ENCODE measurements at regions of chr2 and their contacts with region 1.

Region 1: GRCh38 chr2:37832590-37833197 is 92.4 kb upstream of the RMDN2 start:
- DNase-seq: no peak
- H3K4me3 ChIP-seq: no peak overlapping the region
- CTCF ChIP-seq: peak; percentile 73

Region 2: DNA sequence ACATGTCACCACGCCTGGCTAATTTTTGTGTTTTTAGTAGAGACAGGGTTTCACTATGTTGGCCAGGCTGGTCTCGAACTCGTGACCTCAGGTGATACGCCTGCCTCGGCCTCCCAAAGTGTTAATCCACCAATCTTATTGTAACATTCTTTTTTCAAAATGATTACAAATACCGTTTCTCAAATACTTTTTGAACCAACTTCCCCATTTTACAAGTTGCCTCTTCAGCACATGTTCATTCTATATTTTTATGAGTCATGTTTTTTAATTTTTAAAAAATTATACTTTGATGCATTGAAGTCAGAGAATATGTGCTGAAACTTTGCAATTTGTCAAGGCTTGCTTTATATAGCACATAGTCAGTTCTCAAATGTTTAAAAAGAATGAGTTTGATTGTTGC is 430.1 kb before region 1 on chr2:
- CTCF ChIA-PET with region 1: interaction called, 32 read pairs
- POLR2A ChIA-PET with region 1: no interaction called
- DNase-seq: no peak
- H3K4me3 ChIP-seq: no peak overlapping the region
- CTCF ChIP-seq: no peak

Region 3: DNA sequence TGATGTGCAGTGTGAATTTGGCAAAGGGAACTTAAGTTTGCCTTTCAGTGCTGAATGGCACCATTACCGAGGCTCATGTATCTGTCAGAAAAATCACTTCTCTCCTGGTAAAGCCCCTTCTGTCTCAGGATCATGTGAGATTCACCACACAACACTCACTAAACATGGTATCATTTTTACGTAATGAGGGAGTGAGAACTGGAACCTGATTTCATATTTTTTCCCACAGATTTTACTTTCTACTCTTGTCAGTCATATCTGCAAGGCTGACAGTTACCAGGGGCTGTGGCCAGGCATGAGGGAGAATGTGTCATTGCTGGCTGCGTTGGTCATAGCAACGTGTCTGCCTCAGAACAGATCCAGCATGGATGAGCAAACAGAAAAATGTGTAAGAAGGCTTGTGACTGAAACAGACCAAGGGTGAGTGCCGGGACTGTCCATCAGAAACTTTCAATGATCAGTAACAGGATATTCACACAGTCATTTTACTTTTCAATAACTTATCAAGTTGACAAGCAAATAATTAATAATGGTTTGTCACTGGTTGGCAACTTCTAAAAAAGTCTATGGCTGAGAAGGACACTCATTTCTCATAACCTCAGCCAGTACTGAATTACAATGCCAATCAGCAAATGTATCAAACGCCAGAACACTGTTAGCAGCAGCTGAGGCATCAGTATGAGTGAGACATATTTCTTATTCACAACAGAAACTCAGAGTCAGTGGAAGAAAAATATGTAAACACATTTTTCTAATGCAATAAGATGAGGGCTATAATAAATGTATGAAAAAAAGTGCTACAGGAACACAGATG is 261.7 kb before region 1 on chr2:
- CTCF ChIA-PET with region 1: no interaction called
- POLR2A ChIA-PET with region 1: no interaction called
- DNase-seq: peak; percentile 58
- H3K4me3 ChIP-seq: no peak overlapping the region
- CTCF ChIP-seq: no peak

Region 4: DNA sequence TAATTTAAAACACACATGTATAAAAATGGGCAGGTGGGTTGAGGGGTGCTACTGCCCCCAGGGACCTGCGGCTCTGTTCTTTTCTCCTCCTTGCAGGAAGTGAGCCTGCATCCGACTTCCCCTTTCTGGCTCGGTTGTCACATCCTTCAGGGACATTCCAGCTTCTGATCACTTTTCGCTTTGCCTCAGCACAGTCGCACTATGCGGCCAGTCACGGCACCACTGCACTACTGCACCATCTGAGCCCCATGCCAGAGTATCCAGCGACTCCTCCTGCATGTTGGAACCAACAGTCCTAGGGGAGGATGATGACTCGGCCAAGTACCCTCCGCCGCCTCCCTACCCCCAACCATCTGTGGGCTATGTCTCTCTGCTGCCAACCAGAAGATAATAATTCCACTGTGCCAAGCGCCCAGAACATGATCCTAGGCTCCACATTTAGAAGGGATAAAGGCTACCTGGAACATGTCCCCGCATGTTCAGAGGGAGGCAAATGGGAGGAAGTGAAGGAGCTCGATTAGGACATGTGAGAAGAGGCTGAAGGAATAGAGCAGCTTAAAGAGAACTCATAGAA is 178.8 kb before region 1 on chr2:
- CTCF ChIA-PET with region 1: interaction called, 17 read pairs
- POLR2A ChIA-PET with region 1: interaction called, 5 read pairs
- DNase-seq: no peak
- H3K4me3 ChIP-seq: no peak overlapping the region
- CTCF ChIP-seq: no peak

Region 5: GRCh38 chr2:37672104-37672869 is 160.4 kb before region 1 on chr2:
- CTCF ChIA-PET with region 1: interaction called, 22 read pairs
- POLR2A ChIA-PET with region 1: interaction called, 20 read pairs
- DNase-seq: peak; percentile 75
- H3K4me3 ChIP-seq: peak overlapping the region; percentile 91
- CTCF ChIP-seq: no peak

Region 6: DNA sequence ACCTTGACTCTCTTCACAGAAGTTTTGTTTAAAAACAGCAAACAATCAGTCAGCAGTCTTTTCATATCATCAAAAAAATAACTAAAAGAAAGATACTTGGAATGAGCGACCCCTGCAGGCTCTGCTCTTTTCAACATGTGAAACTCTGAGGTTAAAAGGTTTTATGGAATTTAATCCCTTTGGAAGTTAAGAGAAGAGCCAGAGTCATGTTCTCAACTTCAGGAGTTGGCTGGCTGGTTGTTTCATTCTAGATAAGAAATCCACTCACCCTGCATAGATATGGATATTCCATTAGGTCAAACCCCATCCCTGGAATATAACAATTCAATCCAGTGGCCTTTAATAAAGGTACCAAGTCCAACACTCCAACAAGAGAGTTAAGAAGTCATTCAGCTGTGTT is 23.2 kb before region 1 on chr2:
- CTCF ChIA-PET with region 1: interaction called, 10 read pairs
- POLR2A ChIA-PET with region 1: no interaction called
- DNase-seq: no peak
- H3K4me3 ChIP-seq: no peak overlapping the region
- CTCF ChIP-seq: peak; percentile 35